ENCODE measurements at regions of chr9 and their contacts with region 1.

Region 1: GRCh38 chr9:136400038-136400834 is at the start of gene SNAPC4:
- DNase-seq: peak; percentile 97
- CTCF ChIP-seq: peak; percentile 94

Region 2: GRCh38 chr9:136177224-136177623 is 223.0 kb before region 1 on chr9:
- CTCF ChIA-PET with region 1: no interaction called
- POLR2A ChIA-PET with region 1: no interaction called
- DNase-seq: no peak
- CTCF ChIP-seq: no peak

Region 3: DNA sequence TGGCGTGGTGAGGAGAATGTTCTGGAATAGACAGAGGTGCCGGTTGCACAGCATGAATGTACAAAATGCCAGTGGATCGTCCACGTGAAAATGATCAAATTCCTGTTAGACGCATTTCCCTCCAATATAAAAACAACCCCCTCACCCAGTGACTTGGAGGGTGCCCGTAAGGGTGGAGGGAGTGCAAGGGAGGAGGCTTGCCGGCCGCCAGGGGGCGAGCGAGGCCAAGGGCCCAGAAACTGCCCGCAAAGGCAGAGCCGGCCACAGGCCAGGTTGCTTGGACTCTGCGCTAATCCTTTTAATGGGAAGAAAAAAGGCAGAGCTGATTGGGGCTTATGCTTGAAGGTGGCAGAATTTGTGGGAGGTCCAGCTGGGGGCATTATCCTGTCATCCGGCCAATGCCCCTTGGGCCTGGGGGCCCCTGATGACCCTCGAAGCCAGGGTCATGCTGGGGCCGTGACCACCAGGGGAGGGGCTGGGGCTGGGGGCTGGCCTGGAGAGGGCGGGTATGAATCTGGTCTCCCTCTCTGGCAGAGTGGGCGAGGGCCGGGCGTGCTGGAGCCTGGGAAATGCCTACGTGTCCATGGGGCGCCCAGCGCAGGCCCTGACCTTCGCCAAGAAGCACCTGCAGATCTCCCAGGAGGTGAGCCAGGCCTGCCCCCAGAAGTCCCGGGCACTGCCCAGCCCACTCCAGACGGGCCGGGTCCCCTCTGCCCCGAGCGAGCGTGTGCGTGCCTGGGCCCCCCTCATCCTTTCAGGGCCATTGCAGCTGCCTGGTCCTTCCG is 60.9 kb before region 1 on chr9:
- CTCF ChIA-PET with region 1: interaction called, 13 read pairs
- POLR2A ChIA-PET with region 1: no interaction called
- DNase-seq: peak; percentile 83
- CTCF ChIP-seq: peak; percentile 91

Region 4: GRCh38 chr9:136410500-136411287 is 10.5 kb after region 1 on chr9 and contains the starts of genes ENTR1 and PMPCA:
- CTCF ChIA-PET with region 1: interaction called, 20 read pairs
- POLR2A ChIA-PET with region 1: no interaction called
- DNase-seq: peak; percentile 99
- CTCF ChIP-seq: no peak

Measured in GM10248 (cell line).